Mammary epithelial cell (primary cell): ENCODE measurements at regions of chr3 and their contacts with region 1.

Region 1: GRCh38 chr3:48142316-48142870 is 45.8 kb downstream of the CDC25A start:
- DNase-seq: peak; percentile 90
- H3K4me3 ChIP-seq: no peak overlapping the region
- H3K27ac ChIP-seq: no peak overlapping the region
- H3K4me1 ChIP-seq: peaks cover 13% of the 10 kb centered on the region
- H3K27me3 ChIP-seq: no peaks in the 10 kb centered on the region
- CTCF ChIP-seq: no peak

Region 2: GRCh38 chr3:47899495-47900125 is 242.8 kb before region 1 on chr3:
- CTCF ChIA-PET with region 1: no interaction called
- dilution Hi-C with region 1: loop called (anchors 5 kb)
- in situ Hi-C with region 1: no loop called
- intact Hi-C with region 1: no loop called
- DNase-seq: peak; percentile 9
- H3K4me3 ChIP-seq: no peak overlapping the region
- H3K27ac ChIP-seq: no peak overlapping the region
- H3K4me1 ChIP-seq: no peaks in the 10 kb centered on the region
- H3K27me3 ChIP-seq: no peaks in the 10 kb centered on the region
- CTCF ChIP-seq: no peak